ENCODE measurements at regions of chr1 and their contacts with region 1.

Region 1: GRCh38 chr1:115062542-115063011 is 26.7 kb downstream of the TSPAN2 start:
- DNase-seq: peak; percentile 29 to 54
- ATAC-seq: peak; percentile 81 to 91 (median 90)
- H3K4me3 ChIP-seq: no peak overlapping the region
- H3K27ac ChIP-seq: peak overlapping the region in 9 of 10 donors; percentile 20 to 75 (median 59)
- H3K4me1 ChIP-seq: peaks cover 0 to 18% (median 7%) of the 10 kb centered on the region in 9 donors
- H3K27me3 ChIP-seq: no peaks in the 10 kb centered on the region
- CTCF ChIP-seq: no peak

Region 2: DNA sequence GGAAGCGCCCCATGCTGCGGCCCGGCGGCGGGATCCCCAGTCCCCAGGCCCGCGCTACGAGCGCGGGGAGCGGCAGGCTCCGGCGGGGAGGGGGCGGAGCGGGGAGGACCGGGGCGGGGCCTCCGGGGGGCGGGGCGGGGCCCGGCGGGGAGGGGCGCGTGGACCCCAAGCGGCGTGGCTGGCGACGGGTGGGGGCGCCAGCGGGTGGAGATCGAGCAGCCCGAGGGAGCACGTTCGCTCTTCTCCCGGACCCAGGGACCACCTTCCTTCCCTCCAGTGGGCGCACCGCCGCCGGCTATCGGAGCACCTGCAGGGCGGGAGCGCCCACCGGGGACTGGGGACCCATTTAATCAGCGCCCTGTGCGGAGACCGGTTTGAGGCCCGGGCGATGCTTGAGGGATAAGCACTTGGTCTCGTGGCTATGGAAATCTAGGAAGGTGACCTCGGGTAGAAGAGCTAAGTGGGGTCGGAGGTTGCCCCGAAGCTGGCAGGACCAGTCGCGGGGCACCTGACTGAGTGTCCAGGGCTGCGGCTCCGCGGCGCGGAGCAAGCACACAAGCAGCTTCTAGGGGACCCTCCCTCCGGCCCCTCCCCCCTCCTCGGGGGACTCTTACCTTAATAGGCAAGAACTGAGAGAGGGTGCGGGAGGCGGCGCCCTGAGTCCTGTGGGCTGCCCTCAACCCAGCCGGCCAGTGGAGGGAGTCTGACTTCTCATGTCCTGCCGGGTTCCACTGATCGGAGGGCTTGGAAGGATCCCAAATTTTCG is 27.0 kb after region 1 on chr1 and contains the start of gene TSPAN2:
- intact Hi-C with region 1: loop called in 1 of 10 experiments (anchors 2 kb)
- DNase-seq: peak; percentile 74 to 86
- ATAC-seq: peak; percentile 87 to 94 (median 92)
- H3K4me3 ChIP-seq: peak within 1 kb of the TSS; percentile 46 to 87 (median 72)
- H3K27ac ChIP-seq: peak within 1 kb of the TSS; percentile 11 to 92 (median 82)
- H3K4me1 ChIP-seq: peaks cover 0 to 61% (median 23%) of the 10 kb centered on the region in 9 donors
- H3K27me3 ChIP-seq: no peaks in the 10 kb centered on the region
- CTCF ChIP-seq: peak in 6 of 9 donors; percentile 30 to 63 (median 48)
- total RNA-seq, gene TSPAN2: 4.0 to 17.7 (median 9.5) TPM

Region 3: GRCh38 chr1:115099693-115100050 is 37.1 kb after region 1 on chr1:
- intact Hi-C with region 1: loop called in 1 of 10 experiments (anchors 5 kb)
- DNase-seq: no peak
- ATAC-seq: peak in 4 of 8 donors; percentile 8 to 42 (median 28)
- H3K4me3 ChIP-seq: peak overlapping the region in 3 of 10 donors; percentile 33 to 50 (median 49)
- H3K27ac ChIP-seq: peak overlapping the region in 6 of 10 donors; percentile 36 to 86 (median 64)
- H3K4me1 ChIP-seq: peaks cover 0 to 15% (median 0%) of the 10 kb centered on the region in 9 donors
- H3K27me3 ChIP-seq: peaks cover 0 to 8% (median 0%) of the 10 kb centered on the region in 7 donors
- CTCF ChIP-seq: no peak

Region 4: DNA sequence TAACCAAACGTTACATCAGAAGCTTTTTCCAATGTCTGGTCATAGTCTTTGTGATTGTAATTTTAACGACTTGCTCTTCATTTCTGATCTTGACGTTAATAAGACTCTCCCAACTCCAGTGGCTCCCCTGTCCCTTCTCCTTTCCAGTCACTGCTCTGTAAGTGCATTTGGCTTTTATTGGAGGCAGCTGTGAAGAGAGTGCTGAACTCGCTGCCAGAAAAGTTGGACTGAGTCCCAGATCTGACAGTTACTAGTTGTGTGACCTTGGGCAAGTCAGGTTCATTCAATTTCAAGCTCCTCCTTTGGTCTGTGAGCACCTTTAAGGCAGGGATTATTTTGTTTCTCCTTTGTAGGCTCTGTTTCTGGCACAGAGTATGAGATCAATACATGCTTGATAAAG is 136.4 kb after region 1 on chr1:
- intact Hi-C with region 1: no loop called
- DNase-seq: peak in 1 of 2 donors; percentile 63
- ATAC-seq: peak; percentile 59 to 93 (median 88)
- H3K4me3 ChIP-seq: no peak overlapping the region
- H3K27ac ChIP-seq: peak overlapping the region in 6 of 10 donors; percentile 35 to 49 (median 40)
- H3K4me1 ChIP-seq: peaks cover 0 to 31% (median 11%) of the 10 kb centered on the region in 9 donors
- H3K27me3 ChIP-seq: no peaks in the 10 kb centered on the region
- CTCF ChIP-seq: no peak